Aorta (tissue), 5 donors: ENCODE measurements at regions of chr15 and their contacts with region 1.

Region 1: GRCh38 chr15:62306851-62307504 is 141.9 kb upstream of the C2CD4B start:
- DNase-seq: peak in 1 of 2 donors; percentile 61
- ATAC-seq: peak; percentile 84
- H3K4me3 ChIP-seq: no peak overlapping the region
- H3K27ac ChIP-seq: no peak overlapping the region
- H3K4me1 ChIP-seq: no peaks in the 10 kb centered on the region
- H3K27me3 ChIP-seq: no peaks in the 10 kb centered on the region

Region 2: GRCh38 chr15:61871926-61872522 is 435.0 kb before region 1 on chr15:
- intact Hi-C with region 1: loop called in 1 of 2 experiments (anchors 10 kb)
- DNase-seq: no peak
- ATAC-seq: no peak
- H3K4me3 ChIP-seq: no peak overlapping the region
- H3K27ac ChIP-seq: no peak overlapping the region
- H3K4me1 ChIP-seq: no peaks in the 10 kb centered on the region
- H3K27me3 ChIP-seq: no peaks in the 10 kb centered on the region

Region 3: GRCh38 chr15:62071711-62072308 is 235.2 kb before region 1 on chr15:
- intact Hi-C with region 1: loop called in 1 of 2 experiments (anchors 10 kb)
- DNase-seq: no peak
- ATAC-seq: peak; percentile 53
- H3K4me3 ChIP-seq: no peak overlapping the region
- H3K27ac ChIP-seq: no peak overlapping the region
- H3K4me1 ChIP-seq: no peaks in the 10 kb centered on the region
- H3K27me3 ChIP-seq: no peaks in the 10 kb centered on the region

Region 4: DNA sequence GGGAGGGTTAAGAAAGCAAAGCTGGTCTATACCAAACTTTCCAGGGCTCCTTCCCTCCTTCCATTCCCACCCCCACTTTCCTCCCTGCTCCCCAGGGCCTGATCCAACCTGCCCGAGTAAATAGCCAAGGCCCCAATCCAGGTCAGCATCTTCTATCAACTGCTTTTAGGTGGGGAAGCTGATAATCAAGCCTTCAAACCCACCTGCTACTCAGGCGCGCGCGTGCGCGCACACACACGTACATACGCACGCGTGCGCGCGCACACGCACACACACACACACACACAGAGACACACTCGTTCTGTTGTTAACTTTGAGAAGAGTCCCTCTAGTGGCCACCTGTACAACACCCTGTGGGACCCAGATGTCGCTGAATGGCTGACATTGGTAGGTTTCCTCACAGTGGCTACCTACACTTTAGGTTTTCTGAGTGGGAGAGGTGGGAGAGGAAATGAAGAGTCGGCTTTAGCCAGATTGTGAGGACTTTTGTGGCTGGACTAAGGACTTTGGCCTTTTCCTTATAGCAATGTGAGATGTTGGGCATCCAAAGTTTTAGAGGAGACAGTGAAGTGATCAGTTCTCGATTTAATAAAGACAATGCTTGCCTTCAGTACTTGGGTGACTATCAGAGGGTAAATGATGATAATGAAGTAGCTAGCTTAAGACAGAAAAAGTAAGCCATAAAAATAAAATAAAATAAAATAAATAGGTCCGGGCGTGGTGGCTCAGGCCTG is 38.0 kb after region 1 on chr15:
- intact Hi-C with region 1: no loop called
- DNase-seq: peak in 1 of 2 donors; percentile 60
- ATAC-seq: peak; percentile 67
- H3K4me3 ChIP-seq: no peak overlapping the region
- H3K27ac ChIP-seq: no peak overlapping the region
- H3K4me1 ChIP-seq: no peaks in the 10 kb centered on the region
- H3K27me3 ChIP-seq: no peaks in the 10 kb centered on the region